ENCODE measurements at regions of chr7 and their contacts with region 1.

Region 1: GRCh38 chr7:114939484-114940097 is 17.7 kb downstream of the MDFIC start:
- DNase-seq: peak; percentile 46
- H3K4me3 Mint-ChIP-seq: no peak overlapping the region
- H3K27ac Mint-ChIP-seq: no peak overlapping the region
- H3K4me1 Mint-ChIP-seq: peaks cover 85% of the 10 kb centered on the region
- H3K27me3 Mint-ChIP-seq: no peaks in the 10 kb centered on the region

Region 2: DNA sequence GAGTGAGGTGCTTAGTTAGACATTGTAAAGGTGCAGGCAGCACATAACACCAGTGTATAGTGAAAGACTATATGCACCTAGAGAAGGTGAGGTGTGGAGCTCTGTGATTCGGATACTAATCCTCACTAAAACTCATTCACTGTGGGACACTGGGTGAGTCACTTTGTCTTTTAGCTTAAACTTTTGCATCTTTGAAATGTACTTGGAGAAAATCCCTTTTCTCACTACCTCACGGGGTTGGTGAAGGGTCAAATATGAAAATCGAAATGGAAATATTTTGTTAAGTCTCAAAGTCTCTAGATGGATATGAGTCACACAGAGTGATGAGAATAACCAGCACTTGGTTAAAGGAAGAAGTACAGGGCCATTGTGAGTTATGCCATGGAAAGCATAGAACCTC is 20.3 kb after region 1 on chr7:
- CTCF ChIA-PET with region 1: interaction called, 5 read pairs
- POLR2A ChIA-PET with region 1: no interaction called
- intact Hi-C with region 1: loop called (anchors 2 kb)
- DNase-seq: no peak
- H3K4me3 Mint-ChIP-seq: no peak overlapping the region
- H3K27ac Mint-ChIP-seq: no peak overlapping the region
- H3K4me1 Mint-ChIP-seq: peaks cover 65% of the 10 kb centered on the region
- H3K27me3 Mint-ChIP-seq: no peaks in the 10 kb centered on the region

Region 3: DNA sequence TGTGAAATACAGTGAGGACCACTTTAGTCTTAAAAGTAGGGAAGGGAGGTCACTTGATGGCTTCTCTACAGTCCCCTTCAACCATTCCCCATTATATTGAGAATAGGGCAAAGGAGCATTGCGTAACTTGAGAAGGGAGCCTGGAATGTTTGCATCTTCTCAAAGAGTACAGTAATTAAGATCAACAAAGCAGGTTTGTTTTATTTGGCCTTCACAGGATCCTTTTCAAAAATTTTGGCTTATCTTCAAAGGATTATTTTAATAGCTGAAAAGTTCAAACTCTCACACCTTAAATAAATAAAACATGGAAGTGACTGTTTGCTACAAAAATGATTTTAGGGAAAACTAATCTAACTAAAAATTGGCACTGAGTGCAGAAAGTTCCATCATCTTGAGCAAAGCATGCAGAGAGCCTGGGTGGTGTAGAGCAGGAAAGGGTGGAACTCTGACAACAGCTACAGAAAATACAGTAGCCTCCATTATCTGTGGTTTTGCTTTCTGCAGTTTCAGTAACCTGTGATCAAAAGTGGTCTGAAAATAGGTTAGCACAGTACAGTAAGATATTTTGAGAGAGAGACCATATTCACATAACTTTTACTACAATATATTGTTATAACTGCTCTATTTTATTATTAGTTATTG is 196.3 kb after region 1 on chr7:
- CTCF ChIA-PET with region 1: no interaction called
- POLR2A ChIA-PET with region 1: no interaction called
- intact Hi-C with region 1: no loop called
- DNase-seq: no peak
- H3K4me3 Mint-ChIP-seq: no peak overlapping the region
- H3K27ac Mint-ChIP-seq: no peak overlapping the region
- H3K4me1 Mint-ChIP-seq: peaks cover 30% of the 10 kb centered on the region
- H3K27me3 Mint-ChIP-seq: no peaks in the 10 kb centered on the region

Measured in activated CD4-positive, alpha-beta memory T cell treated with anti-CD3 and anti-CD28 coated beads for 36 hours (primary cell).